H1 (cell line): ENCODE measurements at regions of chr6 and their contacts with region 1.

Region 1: DNA sequence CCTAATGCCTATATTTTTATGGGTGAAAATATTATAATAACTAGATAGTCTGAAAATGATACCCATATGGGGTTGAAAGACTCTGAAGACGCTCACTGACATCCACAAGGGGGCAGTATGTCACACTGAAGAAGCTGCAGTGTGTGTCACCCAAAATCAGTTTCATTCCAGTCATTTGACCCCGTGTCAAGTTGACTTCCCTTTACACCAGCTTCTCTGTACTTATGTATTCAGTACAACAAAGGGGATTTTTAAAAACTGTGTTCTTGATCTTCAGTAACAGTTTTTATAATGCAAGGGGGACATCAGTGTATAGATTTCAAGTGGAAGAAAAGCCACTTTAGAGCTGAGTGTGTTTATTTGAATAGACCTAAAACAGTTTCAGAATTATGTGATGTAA is 19.3 kb downstream of the FAXC start:
- DNase-seq: no peak
- H3K4me3 ChIP-seq: no peak overlapping the region
- H3K27ac ChIP-seq: no peak overlapping the region
- H3K4me1 ChIP-seq: peaks cover 0 to 4% (median 1%) of the 10 kb centered on the region in 4 experiments; a peak in 3 of 7 replicates
- H3K27me3 ChIP-seq: no peaks in the 10 kb centered on the region
- CTCF ChIP-seq: peak; percentile 43 to 79 (median 63)
- EP300 ChIP-seq: no peak
- POLR2A ChIP-seq: no peak
- RAD21 ChIP-seq: peak; percentile 74 to 75

Region 2: DNA sequence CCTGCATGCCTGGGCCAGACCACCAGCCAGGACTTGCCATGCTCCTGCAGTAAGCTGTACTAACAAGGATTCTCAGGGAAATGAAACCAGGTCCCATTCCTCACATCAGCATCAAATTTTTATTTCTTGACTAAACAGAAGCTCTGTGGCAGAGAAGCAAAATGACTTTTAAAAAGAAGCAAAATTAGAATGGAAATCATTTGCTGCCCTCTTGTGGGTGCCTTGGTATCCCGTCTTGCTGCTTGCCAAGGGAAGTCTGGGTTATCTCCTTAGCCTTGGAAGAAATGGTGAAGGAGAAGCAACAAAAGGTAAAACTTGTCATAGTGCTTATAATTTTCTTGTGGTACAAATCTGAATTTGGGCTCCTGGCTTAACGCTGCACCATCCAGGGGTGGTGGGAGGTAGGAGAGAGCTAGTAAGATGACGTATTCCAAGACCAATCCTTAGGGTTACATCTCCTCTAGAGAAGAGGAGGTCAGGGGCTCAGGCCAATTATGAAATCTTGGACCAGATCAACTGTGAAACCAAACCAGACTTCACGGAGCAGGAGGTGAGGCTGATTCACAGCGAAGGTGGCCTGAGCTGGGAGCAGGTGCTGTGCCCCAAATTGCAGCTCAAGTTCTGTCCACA is 88.1 kb before region 1 on chr6:
- CTCF ChIA-PET with region 1: no interaction called
- POLR2A ChIA-PET with region 1: no interaction called
- DNase-seq: peak in 1 of 2 experiments; percentile 61
- H3K4me3 ChIP-seq: no peak overlapping the region
- H3K27ac ChIP-seq: no peak overlapping the region
- H3K4me1 ChIP-seq: no peaks in the 10 kb centered on the region
- H3K27me3 ChIP-seq: no peaks in the 10 kb centered on the region
- CTCF ChIP-seq: peak in 2 of 3 experiments; percentile 56 to 69; a peak in 2 of 4 replicates
- EP300 ChIP-seq: no peak
- POLR2A ChIP-seq: no peak
- RAD21 ChIP-seq: peak; percentile 83 to 86

Region 3: GRCh38 chr6:99297415-99297814 is 32.7 kb before region 1 on chr6:
- CTCF ChIA-PET with region 1: interaction called, 13 read pairs
- POLR2A ChIA-PET with region 1: no interaction called
- DNase-seq: no peak
- H3K4me3 ChIP-seq: no peak overlapping the region
- H3K27ac ChIP-seq: no peak overlapping the region
- H3K4me1 ChIP-seq: no peaks in the 10 kb centered on the region
- H3K27me3 ChIP-seq: no peaks in the 10 kb centered on the region
- CTCF ChIP-seq: no peak
- EP300 ChIP-seq: no peak
- POLR2A ChIP-seq: no peak
- RAD21 ChIP-seq: peak in 1 of 2 experiments; percentile 11; a peak in 1 of 4 replicates

Region 4: DNA sequence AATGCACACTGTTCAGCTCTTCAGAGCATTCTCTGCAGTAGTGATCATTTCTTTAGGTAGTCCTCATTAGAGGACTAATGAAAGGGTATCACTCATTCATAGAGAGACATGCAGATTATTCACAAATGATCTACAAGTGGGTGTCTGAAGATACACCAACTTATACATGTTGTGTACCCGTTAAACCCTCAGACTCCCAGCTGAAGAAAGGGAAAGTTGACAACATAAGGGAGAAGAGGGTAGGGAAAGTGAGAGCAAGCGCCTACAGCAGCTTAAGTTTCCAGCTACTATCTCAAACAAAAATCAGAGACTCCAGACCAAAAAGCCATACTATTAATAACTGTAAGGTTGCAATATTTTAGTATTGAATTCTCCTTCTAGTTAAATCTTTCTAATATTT is 17.8 kb before region 1 on chr6:
- CTCF ChIA-PET with region 1: interaction called, 20 read pairs
- POLR2A ChIA-PET with region 1: interaction called, 4 read pairs
- DNase-seq: no peak
- H3K4me3 ChIP-seq: no peak overlapping the region
- H3K27ac ChIP-seq: no peak overlapping the region
- H3K4me1 ChIP-seq: peaks cover 0 to 5% (median 1%) of the 10 kb centered on the region in 4 experiments; a peak in 1 of 7 replicates
- H3K27me3 ChIP-seq: no peaks in the 10 kb centered on the region
- CTCF ChIP-seq: no peak
- EP300 ChIP-seq: no peak
- POLR2A ChIP-seq: no peak
- RAD21 ChIP-seq: no peak

Region 5: GRCh38 chr6:99344289-99344688 is 14.1 kb after region 1 on chr6:
- CTCF ChIA-PET with region 1: interaction called, 67 read pairs
- POLR2A ChIA-PET with region 1: interaction called, 9 read pairs
- DNase-seq: no peak
- H3K4me3 ChIP-seq: peak overlapping the region in 1 of 4 experiments; percentile 2; a peak in 1 of 8 replicates
- H3K27ac ChIP-seq: no peak overlapping the region
- H3K4me1 ChIP-seq: peaks cover 0 to 15% (median 8%) of the 10 kb centered on the region in 4 experiments; a peak in 5 of 7 replicates
- H3K27me3 ChIP-seq: no peaks in the 10 kb centered on the region
- CTCF ChIP-seq: no peak
- EP300 ChIP-seq: no peak
- POLR2A ChIP-seq: no peak
- RAD21 ChIP-seq: no peak

Region 6: GRCh38 chr6:99369533-99369932 is 39.4 kb after region 1 on chr6:
- CTCF ChIA-PET with region 1: interaction called, 26 read pairs
- POLR2A ChIA-PET with region 1: no interaction called
- DNase-seq: no peak
- H3K4me3 ChIP-seq: no peak overlapping the region
- H3K27ac ChIP-seq: no peak overlapping the region
- H3K4me1 ChIP-seq: peaks cover 0 to 3% (median 0%) of the 10 kb centered on the region in 4 experiments; a peak in 2 of 7 replicates
- H3K27me3 ChIP-seq: no peaks in the 10 kb centered on the region
- CTCF ChIP-seq: no peak
- EP300 ChIP-seq: no peak
- POLR2A ChIP-seq: no peak
- RAD21 ChIP-seq: no peak

Region 7: DNA sequence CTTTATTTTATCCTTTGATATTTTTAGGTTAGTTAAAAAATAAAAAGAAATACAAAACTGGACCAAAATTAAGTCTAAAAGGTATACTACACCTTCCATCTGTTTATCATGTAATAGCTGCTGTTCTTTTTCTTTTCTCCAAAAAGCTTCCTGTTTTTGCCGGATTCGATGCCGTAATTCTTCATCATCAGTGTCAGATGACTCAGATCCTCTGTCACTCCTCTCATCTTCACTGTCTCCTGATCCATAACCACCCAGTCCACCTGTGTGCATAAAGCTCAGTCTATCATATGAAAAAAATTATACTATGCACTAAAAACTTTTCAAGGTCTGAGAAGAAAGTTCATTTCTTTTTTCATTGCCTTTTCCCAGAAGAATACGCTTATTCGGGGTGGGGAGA is 72.3 kb after region 1 on chr6:
- CTCF ChIA-PET with region 1: interaction called, 65 read pairs
- POLR2A ChIA-PET with region 1: no interaction called
- DNase-seq: no peak
- H3K4me3 ChIP-seq: no peak overlapping the region
- H3K27ac ChIP-seq: no peak overlapping the region
- H3K4me1 ChIP-seq: no peaks in the 10 kb centered on the region
- H3K27me3 ChIP-seq: no peaks in the 10 kb centered on the region
- CTCF ChIP-seq: no peak
- EP300 ChIP-seq: no peak
- POLR2A ChIP-seq: no peak
- RAD21 ChIP-seq: no peak